GM10248 (cell line): ENCODE measurements at regions of chr5 and their contacts with region 1.

Region 1: DNA sequence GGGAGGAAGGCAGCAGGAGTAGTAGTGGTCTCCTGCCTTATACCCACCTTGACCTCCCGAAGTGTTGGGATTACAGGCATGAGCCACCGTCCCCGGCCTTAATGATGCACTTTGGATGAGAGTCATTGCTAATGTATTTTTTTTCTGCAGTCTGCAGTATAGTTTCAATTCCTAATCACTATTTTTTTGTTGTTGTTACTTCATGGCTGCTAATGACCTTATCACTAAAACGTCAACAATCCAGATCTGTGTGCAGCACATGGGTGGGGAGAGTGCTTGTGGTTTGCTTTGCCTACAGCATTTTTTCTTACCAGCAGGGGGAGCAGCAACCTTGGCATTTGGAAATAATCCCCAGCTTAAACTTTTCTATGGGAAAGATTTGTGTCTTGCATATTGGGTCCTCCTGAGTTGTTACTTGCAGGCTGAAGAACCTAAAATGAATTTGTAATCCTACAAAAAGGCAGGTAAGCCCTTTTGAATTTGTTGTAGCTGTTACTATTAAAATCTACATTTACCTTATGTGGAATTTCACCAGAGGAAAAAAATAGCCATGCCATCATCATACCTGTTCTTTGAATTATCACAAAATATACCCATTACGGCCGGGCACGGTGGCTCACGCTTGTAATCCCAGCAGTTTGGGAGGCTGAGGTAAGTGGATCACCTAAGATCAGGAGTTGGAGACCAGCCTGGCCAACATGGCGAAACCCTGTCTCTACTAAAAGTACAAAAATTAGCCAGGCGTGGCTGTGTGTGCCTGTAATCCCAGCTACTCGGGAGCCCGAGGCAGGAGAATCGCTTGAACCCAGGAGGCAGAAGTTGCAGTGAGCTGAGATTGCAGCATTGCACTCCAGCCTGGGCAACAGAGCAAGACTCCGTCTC is 6.3 kb upstream of the MED7 start:
- DNase-seq: peak; percentile 71
- CTCF ChIP-seq: peak; percentile 77

Region 2: DNA sequence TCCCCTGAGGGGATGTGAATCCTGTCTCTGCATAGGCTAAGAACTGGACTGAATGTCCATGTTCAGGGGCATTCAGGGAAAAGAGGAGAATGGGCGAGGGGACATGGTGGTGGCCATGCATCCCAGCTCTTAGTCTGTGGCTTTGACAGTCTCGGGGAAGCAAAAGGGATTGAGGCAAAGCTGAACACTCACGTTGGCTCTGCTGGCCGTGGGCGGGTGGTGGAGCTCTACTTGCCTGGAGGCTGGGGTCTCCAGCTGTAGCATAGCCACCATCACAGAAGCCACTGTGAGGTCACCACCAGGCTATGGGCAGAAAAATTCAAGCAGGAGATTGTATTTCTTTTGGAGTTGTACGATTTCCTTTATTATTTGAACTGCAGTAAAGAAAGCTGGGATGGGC is 13.0 kb after region 1 on chr5:
- CTCF ChIA-PET with region 1: interaction called, 30 read pairs
- POLR2A ChIA-PET with region 1: no interaction called
- DNase-seq: no peak
- CTCF ChIP-seq: no peak

Region 3: DNA sequence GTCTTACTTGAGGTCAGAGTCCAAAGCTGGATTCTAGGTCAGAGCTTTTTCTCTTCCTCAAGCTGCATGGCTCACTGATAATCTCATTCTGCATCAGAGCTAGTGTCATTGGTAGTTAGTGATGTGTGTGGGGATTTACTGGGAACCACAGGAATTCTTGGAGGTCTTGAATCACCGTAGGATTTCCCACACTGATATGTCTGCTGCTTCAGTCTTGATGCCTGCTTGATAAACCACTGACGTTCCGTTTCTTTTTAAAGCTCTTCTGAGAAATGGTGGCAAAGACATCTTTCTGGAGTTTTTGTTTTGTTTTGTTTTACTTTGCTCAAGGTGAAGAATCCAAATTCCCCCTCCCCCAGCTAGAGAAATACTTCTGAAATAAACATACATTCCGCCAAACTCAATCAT is 18.2 kb after region 1 on chr5:
- CTCF ChIA-PET with region 1: interaction called, 30 read pairs
- POLR2A ChIA-PET with region 1: no interaction called
- DNase-seq: peak; percentile 26
- CTCF ChIP-seq: no peak

Region 4: GRCh38 chr5:157172403-157172802 is 23.4 kb after region 1 on chr5:
- CTCF ChIA-PET with region 1: interaction called, 18 read pairs
- POLR2A ChIA-PET with region 1: no interaction called
- DNase-seq: peak; percentile 82
- CTCF ChIP-seq: no peak

Region 5: GRCh38 chr5:157271740-157272271 is 122.8 kb after region 1 on chr5:
- CTCF ChIA-PET with region 1: interaction called, 11 read pairs
- POLR2A ChIA-PET with region 1: interaction called, 4 read pairs
- DNase-seq: peak; percentile 74
- CTCF ChIP-seq: no peak

Region 6: DNA sequence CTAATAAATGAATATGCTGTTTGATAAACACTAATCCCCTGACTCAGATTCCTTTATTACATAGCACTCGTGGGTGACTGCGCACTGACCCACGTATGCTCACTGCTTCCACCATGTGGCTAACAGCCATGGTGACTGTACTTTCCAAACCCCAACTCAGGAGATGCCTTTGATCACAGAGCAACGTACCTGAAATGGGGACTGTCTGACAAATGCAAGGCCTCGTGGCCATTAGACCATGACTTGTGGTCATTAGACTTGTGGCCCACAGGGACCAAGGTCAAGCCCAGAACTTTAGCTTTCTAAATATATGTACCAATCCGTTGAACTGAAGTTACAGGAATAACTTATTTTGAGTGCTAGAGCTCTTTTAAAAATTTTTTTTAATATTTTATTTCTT is 163.5 kb after region 1 on chr5:
- CTCF ChIA-PET with region 1: interaction called, 22 read pairs
- POLR2A ChIA-PET with region 1: no interaction called
- DNase-seq: peak; percentile 84
- CTCF ChIP-seq: peak; percentile 83